ENCODE measurements at regions of chr16 and their contacts with region 1.

Region 1: DNA sequence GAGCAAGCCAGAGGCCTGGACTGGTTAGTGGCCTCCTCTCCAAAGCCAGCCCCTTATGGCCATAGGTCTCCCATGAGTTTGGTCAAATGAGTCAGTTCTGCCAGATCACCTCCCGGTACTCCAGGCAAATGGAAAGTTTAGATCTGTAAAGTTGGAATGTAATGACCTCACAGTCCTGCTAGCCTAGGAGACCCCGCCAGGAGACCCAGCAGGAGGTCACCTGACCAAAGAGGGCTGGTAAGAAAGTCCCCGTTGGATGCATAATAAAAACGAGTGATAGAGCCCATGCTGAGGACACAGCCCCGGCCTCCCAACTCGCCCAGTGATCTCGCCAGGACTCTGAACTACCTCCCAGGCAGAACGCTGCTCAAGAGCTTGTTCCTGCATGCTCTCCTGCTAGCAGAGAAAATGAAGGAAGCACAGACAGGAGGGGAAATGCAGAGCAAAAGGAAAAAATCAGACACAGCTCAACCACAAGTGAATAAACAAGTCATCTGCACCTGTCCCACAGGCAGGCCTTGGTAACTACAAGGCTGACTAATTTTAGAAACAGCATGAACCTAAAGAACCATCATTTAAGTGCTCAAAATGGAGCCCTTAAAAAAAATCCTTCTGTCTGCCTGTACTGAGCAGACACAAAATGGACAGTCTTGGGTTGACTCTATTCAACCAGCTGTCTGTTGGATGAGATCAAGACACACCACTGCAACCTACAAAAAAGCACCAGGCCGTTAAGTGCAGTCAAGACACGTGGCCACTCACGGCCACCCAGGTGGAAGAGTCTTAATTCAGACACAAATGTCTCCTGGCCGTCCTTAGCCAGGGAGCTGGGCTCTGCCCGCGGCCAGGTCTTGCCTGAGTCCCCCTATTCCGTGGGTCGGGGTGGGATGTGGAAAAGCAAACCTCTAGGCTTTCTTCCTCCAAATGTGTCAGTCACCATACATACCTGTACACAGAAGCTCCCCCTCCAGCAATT is 9.2 kb downstream of the CDIP1 start:
- DNase-seq: peak in 3 of 14 experiments; percentile 34 to 53 (median 35)
- ATAC-seq: peak; percentile 79
- H3K4me3 ChIP-seq: no peak overlapping the region
- H3K4me3 Mint-ChIP-seq: peak overlapping the region; percentile 78
- H3K27ac ChIP-seq: no peak overlapping the region
- H3K27ac Mint-ChIP-seq: peak overlapping the region; percentile 77
- H3K4me1 ChIP-seq: peaks cover 48% of the 10 kb centered on the region
- H3K4me1 Mint-ChIP-seq: peaks cover 46% of the 10 kb centered on the region
- H3K27me3 ChIP-seq: no peaks in the 10 kb centered on the region
- H3K27me3 Mint-ChIP-seq: no peaks in the 10 kb centered on the region
- CTCF ChIP-seq: no peak

Region 2: GRCh38 chr16:4392382-4393239 is 136.8 kb before region 1 on chr16:
- CTCF ChIA-PET with region 1: no interaction called
- POLR2A ChIA-PET with region 1: no interaction called
- intact Hi-C with region 1: no loop called
- DNase-seq: no peak
- ATAC-seq: no peak
- H3K4me3 ChIP-seq: no peak overlapping the region
- H3K4me3 Mint-ChIP-seq: no peak overlapping the region
- H3K27ac ChIP-seq: no peak overlapping the region
- H3K27ac Mint-ChIP-seq: peak overlapping the region; percentile 17
- H3K4me1 ChIP-seq: peaks cover 13% of the 10 kb centered on the region
- H3K4me1 Mint-ChIP-seq: peaks cover 5% of the 10 kb centered on the region
- H3K27me3 ChIP-seq: no peaks in the 10 kb centered on the region
- H3K27me3 Mint-ChIP-seq: no peaks in the 10 kb centered on the region
- CTCF ChIP-seq: no peak

Region 3: DNA sequence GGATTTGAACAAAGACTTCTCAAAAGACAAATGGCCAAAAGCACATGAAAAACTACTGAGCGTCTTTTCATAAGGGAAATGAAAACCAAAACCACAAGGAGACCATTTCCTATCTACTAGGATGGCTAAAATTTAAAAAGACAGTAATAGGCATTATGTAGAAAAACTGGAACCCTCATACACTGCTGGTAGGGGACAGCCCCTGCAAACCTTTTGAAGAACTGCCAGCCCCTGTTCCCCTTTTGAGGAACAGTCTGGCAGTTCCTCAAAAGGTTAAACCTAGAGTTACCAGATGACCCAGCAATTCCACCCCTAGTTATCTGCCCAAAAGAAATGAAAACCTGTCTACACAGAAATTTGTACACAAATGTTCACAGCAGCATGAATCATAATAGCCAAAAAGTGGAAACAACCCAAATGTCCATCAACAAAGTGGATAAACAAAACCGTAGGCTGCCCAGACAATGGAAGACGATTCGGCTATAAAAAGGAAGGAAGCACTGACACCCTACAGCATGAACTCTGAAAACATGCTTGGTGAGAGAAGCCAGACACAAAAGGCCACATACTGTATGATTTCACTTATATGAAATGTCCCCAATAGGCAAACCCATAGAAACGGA is 13.7 kb before region 1 on chr16:
- CTCF ChIA-PET with region 1: interaction called, 3 read pairs
- POLR2A ChIA-PET with region 1: interaction called, 6 read pairs
- intact Hi-C with region 1: loop called in 1 of 2 experiments (anchors 2 kb)
- DNase-seq: peak in 3 of 14 experiments; percentile 50 to 62 (median 56)
- ATAC-seq: peak; percentile 31
- H3K4me3 ChIP-seq: no peak overlapping the region
- H3K4me3 Mint-ChIP-seq: peak overlapping the region; percentile 69
- H3K27ac ChIP-seq: peak overlapping the region; percentile 61 to 81
- H3K27ac Mint-ChIP-seq: peak overlapping the region; percentile 88
- H3K4me1 ChIP-seq: peaks cover 67% of the 10 kb centered on the region
- H3K4me1 Mint-ChIP-seq: peaks cover 57% of the 10 kb centered on the region
- H3K27me3 ChIP-seq: no peaks in the 10 kb centered on the region
- H3K27me3 Mint-ChIP-seq: no peaks in the 10 kb centered on the region
- CTCF ChIP-seq: no peak

Measured in CD4-positive, alpha-beta T cell (primary cell).